ENCODE measurements at regions of chr10 and their contacts with region 1.

Region 1: GRCh38 chr10:76902949-76903348 is 734.7 kb downstream of the KCNMA1 start:
- DNase-seq: peak; percentile 70
- ATAC-seq: peak; percentile 72

Region 2: DNA sequence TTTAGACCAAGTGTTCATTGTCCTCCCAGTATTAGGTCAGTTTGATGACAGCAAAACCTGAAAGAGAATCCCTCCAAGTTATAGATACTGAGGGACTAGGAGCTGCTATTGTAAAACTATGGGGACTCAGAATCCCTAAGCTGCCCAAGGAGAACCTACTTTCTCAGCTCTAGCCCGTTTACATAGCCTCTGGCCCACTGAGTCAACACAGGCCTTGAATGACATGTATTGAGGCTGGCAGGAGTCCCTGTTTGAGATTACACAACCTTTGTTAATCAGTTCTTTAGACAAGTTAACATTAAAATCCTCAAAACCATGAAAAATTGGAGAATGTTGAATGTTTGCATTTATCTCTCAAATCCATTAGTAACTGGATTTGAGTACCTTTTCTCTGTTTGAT is 344.4 kb before region 1 on chr10:
- intact Hi-C with region 1: loop called (anchors 10 kb)
- DNase-seq: no peak
- ATAC-seq: no peak

Region 3: DNA sequence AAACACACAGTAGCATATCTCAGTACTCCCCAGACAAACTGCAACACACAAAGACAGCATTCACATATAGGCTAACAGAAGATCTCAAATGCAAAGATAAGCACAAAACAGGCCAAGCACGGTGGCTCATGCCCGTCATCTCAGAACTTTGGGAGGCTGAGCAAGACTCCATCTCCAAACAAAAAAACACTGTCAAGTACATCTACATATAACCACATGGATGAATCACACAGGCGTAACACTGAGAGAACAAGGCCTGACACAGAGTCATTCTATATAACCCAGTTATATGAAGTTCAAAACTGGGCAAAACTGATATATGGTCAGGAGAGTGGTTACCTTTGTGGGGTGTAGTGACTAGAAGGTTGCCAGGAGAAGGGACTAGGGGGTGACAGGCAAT is 228.3 kb after region 1 on chr10:
- intact Hi-C with region 1: no loop called
- DNase-seq: no peak
- ATAC-seq: no peak

Measured in Right ventricle myocardium inferior (tissue), 1 donor.